CD4-positive, alpha-beta T cell (primary cell): ENCODE measurements at regions of chr15 and their contacts with region 1.

Region 1: DNA sequence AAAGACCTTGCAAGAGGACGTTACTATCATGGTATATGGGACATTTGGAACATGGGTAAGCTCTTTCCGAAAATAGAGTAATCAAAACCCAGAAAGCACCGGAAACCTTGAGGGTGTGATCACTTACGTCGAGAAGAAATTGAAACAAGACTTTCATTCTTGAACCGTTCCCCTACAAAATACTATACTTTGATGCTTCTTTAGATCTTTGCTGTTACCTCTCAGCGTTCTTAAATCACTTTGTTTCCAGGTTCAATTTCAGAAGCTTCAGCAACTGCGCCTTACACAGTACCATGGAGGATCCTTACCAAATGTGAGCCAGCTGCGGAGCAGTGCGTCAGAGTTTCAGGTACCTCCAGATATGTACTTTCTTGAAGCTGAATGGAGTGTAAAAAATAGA is 10.1 kb downstream of the CRTC3 start:
- DNase-seq: peak in 9 of 14 experiments; percentile 13 to 74 (median 45)
- ATAC-seq: peak; percentile 87
- H3K4me3 ChIP-seq: peak overlapping the region; percentile 54
- H3K4me3 Mint-ChIP-seq: peak overlapping the region; percentile 89
- H3K27ac ChIP-seq: peak overlapping the region; percentile 49 to 83
- H3K27ac Mint-ChIP-seq: peak overlapping the region; percentile 97
- H3K4me1 ChIP-seq: peaks cover 35% of the 10 kb centered on the region
- H3K4me1 Mint-ChIP-seq: peaks cover 80% of the 10 kb centered on the region
- H3K27me3 ChIP-seq: no peaks in the 10 kb centered on the region
- H3K27me3 Mint-ChIP-seq: no peaks in the 10 kb centered on the region
- CTCF ChIP-seq: no peak

Region 2: GRCh38 chr15:90557186-90558084 is 17.6 kb after region 1 on chr15:
- CTCF ChIA-PET with region 1: interaction called, 4 read pairs
- POLR2A ChIA-PET with region 1: interaction called, 13 read pairs
- intact Hi-C with region 1: loop called in 1 of 2 experiments (anchors 2 kb)
- DNase-seq: no peak
- ATAC-seq: no peak
- H3K4me3 ChIP-seq: no peak overlapping the region
- H3K4me3 Mint-ChIP-seq: peak overlapping the region; percentile 5
- H3K27ac ChIP-seq: no peak overlapping the region
- H3K27ac Mint-ChIP-seq: peak overlapping the region; percentile 93
- H3K4me1 ChIP-seq: peaks cover 41% of the 10 kb centered on the region
- H3K4me1 Mint-ChIP-seq: peaks cover 86% of the 10 kb centered on the region
- H3K27me3 ChIP-seq: no peaks in the 10 kb centered on the region
- H3K27me3 Mint-ChIP-seq: no peaks in the 10 kb centered on the region
- CTCF ChIP-seq: no peak

Region 3: DNA sequence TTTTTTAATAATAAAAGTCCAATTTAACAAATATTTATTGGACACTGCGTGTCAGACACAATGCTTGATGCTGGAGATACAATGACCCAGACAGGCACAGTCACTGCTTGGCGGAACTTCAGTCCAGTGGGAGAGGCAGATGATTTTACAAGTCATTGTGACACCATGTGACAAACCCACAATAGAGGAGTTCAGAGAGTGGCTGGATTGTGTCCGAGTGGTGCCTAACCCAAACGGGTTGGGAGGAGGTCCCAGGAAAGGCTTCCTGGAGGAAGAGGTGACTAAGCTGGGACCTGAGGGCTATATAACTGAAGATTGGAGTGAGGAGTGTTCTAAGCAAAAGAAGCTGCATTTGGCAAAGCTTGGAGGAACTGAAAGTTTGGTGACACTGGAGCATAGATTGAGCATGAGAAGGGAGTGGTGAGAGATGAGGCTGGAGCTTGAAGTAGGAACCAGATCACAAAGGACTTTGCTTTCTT is 31.3 kb after region 1 on chr15:
- CTCF ChIA-PET with region 1: no interaction called
- POLR2A ChIA-PET with region 1: interaction called, 23 read pairs
- intact Hi-C with region 1: loop called in 1 of 2 experiments (anchors 5 kb)
- DNase-seq: peak in 2 of 14 experiments; percentile 53 to 60
- ATAC-seq: no peak
- H3K4me3 ChIP-seq: no peak overlapping the region
- H3K4me3 Mint-ChIP-seq: no peak overlapping the region
- H3K27ac ChIP-seq: peak overlapping the region in 1 of 2 donors; percentile 32
- H3K27ac Mint-ChIP-seq: peak overlapping the region; percentile 77
- H3K4me1 ChIP-seq: peaks cover 77% of the 10 kb centered on the region
- H3K4me1 Mint-ChIP-seq: peaks cover 89% of the 10 kb centered on the region
- H3K27me3 ChIP-seq: no peaks in the 10 kb centered on the region
- H3K27me3 Mint-ChIP-seq: no peaks in the 10 kb centered on the region
- CTCF ChIP-seq: no peak

Region 4: GRCh38 chr15:90598031-90598577 is 58.3 kb after region 1 on chr15:
- CTCF ChIA-PET with region 1: interaction called, 6 read pairs
- POLR2A ChIA-PET with region 1: interaction called, 10 read pairs
- intact Hi-C with region 1: loop called in 1 of 2 experiments (anchors 2 kb)
- DNase-seq: peak in 3 of 14 experiments; percentile 17 to 39 (median 34)
- ATAC-seq: no peak
- H3K4me3 ChIP-seq: no peak overlapping the region
- H3K4me3 Mint-ChIP-seq: peak overlapping the region; percentile 74
- H3K27ac ChIP-seq: peak overlapping the region; percentile 81 to 87
- H3K27ac Mint-ChIP-seq: peak overlapping the region; percentile 98
- H3K4me1 ChIP-seq: peaks cover 60% of the 10 kb centered on the region
- H3K4me1 Mint-ChIP-seq: peaks cover 82% of the 10 kb centered on the region
- H3K27me3 ChIP-seq: no peaks in the 10 kb centered on the region
- H3K27me3 Mint-ChIP-seq: no peaks in the 10 kb centered on the region
- CTCF ChIP-seq: no peak